Activated T-helper 1 cell treated with anti-CD3 and anti-CD28 coated beads, Interleukin-12 subunit alpha, Interleukin-12 subunit beta, Interleukin-2, Interleukin-4 antibody, amounts not matched to agents 30 ng/mL and 10 ng/mL and 1 ng/mL, durations not matched to agents 14 hours and 24 hours and 36 hours (primary cell): ENCODE measurements at regions of chr11 and their contacts with region 1.

Region 1: DNA sequence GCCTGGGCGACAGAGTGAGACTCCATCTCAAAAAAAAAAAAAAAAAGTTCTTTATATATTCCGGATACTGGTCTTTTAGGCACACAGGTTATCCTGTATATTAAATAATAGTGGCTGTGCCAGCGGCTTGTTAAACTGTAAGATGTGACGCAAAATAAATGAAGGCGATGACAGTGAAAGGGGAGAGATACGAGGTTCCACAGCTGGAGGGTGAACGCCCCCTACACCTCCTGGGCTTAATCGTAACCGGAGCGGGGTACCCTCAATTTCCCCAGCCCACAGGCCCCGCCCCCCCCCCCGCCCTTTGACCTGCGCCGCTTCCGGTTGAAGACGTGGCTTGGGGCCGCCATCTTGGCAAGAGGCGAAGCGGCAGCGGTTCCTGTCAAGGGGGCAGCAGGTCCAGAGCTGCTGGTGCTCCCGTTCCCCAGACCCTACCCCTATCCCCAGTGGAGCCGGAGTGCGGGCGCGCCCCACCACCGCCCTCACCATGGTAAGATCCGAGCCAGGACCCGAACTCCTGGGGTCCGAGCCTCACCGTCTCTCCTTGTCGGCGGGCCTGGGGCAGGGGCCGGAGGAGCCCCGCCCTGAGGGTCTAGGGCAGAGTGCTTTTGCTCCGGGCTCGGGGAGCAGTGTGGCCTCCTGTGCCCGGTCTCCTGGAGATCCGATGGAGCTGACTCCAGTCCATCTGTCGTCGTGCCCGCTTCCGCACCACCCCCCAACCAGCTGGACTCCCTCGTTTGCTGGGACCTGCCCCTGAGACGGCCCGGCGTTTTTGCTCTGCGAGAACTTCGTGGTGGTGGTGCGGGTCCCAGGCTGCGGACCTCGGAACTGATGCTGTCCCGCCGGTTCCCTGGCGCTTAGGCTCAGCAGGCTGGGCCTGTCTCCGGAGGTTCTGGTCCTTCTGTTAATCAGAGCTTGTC is at the start of gene ARCN1:
- DNase-seq: peak; percentile 69
- H3K4me3 Mint-ChIP-seq: peak within 1 kb of the TSS; percentile 98
- H3K27ac Mint-ChIP-seq: peak within 1 kb of the TSS; percentile 96
- H3K4me1 Mint-ChIP-seq: peaks cover 51% of the 10 kb centered on the region
- H3K27me3 Mint-ChIP-seq: no peaks in the 10 kb centered on the region
- total RNA-seq, gene ARCN1: 162 and 165 TPM in 2 replicates

Region 2: GRCh38 chr11:118359295-118359958 is 212.9 kb before region 1 on chr11 and contains the start of gene UBE4A:
- intact Hi-C with region 1: loop called (anchors 2 kb)
- DNase-seq: peak; percentile 94
- H3K4me3 Mint-ChIP-seq: peak within 1 kb of the TSS; percentile 95
- H3K27ac Mint-ChIP-seq: peak within 1 kb of the TSS; percentile 89
- H3K4me1 Mint-ChIP-seq: peaks cover 39% of the 10 kb centered on the region
- H3K27me3 Mint-ChIP-seq: no peaks in the 10 kb centered on the region
- total RNA-seq, gene UBE4A: 44.1 and 46.0 TPM in 2 replicates

Region 3: DNA sequence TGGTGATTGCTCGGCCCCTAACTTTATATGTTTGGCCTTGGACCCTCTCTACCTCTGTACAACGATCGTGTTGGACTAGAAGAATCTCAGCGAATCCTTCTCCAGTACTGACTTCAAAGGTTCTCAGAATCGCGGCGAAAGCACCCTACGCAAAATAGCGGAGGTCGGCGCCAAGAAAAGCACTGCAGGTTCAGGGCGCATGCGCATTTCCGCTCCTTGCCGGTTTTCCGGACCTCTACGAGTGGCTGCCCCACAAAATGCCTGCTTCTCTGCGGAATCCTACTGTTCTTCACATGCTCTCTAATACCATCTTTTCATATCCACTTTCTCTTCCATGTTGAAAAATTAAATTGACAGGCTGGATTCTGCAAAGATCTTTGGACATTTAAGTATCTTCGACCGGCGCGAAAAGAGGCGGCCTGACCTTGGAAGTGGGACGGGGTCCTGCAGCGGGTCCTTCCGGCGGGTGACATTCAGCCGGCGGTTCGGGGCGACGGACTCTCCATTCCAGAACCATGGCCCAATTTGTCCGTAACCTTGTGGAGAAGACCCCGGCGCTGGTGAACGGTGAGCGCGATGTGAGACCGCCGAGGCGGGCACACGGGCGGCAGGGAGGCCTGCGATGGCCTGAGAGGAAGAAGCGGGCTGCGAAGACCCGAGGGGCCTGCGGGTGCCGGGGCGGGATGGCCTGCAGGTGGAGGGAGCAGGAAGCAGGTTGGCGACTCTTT is 171.0 kb before region 1 on chr11 and contains the start of gene ATP5MG:
- intact Hi-C with region 1: loop called (anchors 1 kb)
- DNase-seq: peak; percentile 87
- H3K4me3 Mint-ChIP-seq: peak within 1 kb of the TSS; percentile 93
- H3K27ac Mint-ChIP-seq: peak within 1 kb of the TSS; percentile 96
- H3K4me1 Mint-ChIP-seq: peaks cover 68% of the 10 kb centered on the region
- H3K27me3 Mint-ChIP-seq: no peaks in the 10 kb centered on the region
- total RNA-seq, gene ATP5MG: 205 and 216 TPM in 2 replicates

Region 4: GRCh38 chr11:118610804-118611795 is 38.8 kb after region 1 on chr11:
- intact Hi-C with region 1: loop called (anchors 2 kb)
- DNase-seq: peak; percentile 73
- H3K4me3 Mint-ChIP-seq: peak overlapping the region; percentile 50
- H3K27ac Mint-ChIP-seq: no peak overlapping the region
- H3K4me1 Mint-ChIP-seq: peaks cover 23% of the 10 kb centered on the region
- H3K27me3 Mint-ChIP-seq: peaks cover 23% of the 10 kb centered on the region